Activated CD8-positive, alpha-beta T cell treated with anti-CD3 and anti-CD28 coated beads for 36 hours (primary cell): ENCODE measurements at regions of chr22 and their contacts with region 1.

Region 1: DNA sequence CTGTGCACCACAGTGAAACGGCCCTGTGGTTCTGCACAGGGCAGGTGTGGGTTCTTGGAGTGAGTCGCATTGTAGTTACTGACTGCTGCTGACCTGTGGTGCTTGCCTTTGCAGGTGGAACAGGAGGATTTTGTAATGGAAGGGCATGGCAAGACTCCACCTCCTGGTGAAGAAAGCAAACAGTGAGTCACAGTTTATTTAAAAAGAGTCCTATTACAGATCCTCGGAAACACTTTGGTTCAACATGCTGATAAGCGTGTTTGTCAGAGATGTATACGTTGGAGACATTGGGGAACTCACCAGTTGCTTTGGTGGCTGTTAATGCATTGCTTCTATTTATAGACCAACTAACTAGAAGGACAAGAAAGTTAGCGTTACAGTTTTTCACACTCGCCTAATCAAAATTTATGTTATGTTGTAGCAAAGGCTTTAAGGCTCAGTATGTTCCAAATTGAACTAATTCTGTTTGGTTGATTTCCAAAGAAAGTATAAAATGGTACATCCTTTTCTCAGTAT is 21.7 kb upstream of the TNRC6B start:
- DNase-seq: peak; percentile 32
- ATAC-seq: peak; percentile 78
- H3K4me3 Mint-ChIP-seq: no peak overlapping the region
- H3K27ac Mint-ChIP-seq: peak overlapping the region; percentile 62
- H3K4me1 Mint-ChIP-seq: peaks cover 12% of the 10 kb centered on the region
- H3K27me3 Mint-ChIP-seq: no peaks in the 10 kb centered on the region
- CTCF ChIP-seq: no peak

Region 2: DNA sequence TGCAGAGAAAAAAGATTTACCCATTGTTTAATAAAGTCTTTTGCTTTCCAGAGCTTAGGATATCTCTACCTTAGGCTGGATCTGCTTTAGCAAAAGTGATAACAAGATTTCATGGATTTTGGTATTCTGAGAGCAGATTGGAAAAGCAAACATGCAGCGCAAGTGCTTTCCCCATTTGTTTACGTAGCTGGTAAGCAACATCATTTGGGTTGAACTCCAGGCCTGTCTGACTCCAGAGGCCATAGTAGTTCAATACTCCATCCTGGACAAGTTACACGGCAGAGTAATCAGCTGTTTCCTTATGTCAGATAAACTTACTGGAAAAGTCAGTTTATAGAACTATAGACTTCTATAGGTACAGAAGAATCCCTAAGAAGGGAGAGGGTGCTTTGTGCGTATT is 18.9 kb before region 1 on chr22:
- CTCF ChIA-PET with region 1: no interaction called
- POLR2A ChIA-PET with region 1: interaction called, 10 read pairs
- intact Hi-C with region 1: no loop called
- DNase-seq: no peak
- ATAC-seq: no peak
- H3K4me3 Mint-ChIP-seq: no peak overlapping the region
- H3K27ac Mint-ChIP-seq: no peak overlapping the region
- H3K4me1 Mint-ChIP-seq: peaks cover 7% of the 10 kb centered on the region
- H3K27me3 Mint-ChIP-seq: no peaks in the 10 kb centered on the region
- CTCF ChIP-seq: no peak

Region 3: GRCh38 chr22:40224702-40225101 is 68.6 kb after region 1 on chr22:
- CTCF ChIA-PET with region 1: no interaction called
- POLR2A ChIA-PET with region 1: no interaction called
- intact Hi-C with region 1: no loop called
- DNase-seq: peak; percentile 71
- ATAC-seq: peak; percentile 96
- H3K4me3 Mint-ChIP-seq: peak overlapping the region; percentile 40
- H3K27ac Mint-ChIP-seq: peak overlapping the region; percentile 85
- H3K4me1 Mint-ChIP-seq: peaks cover 55% of the 10 kb centered on the region
- H3K27me3 Mint-ChIP-seq: no peaks in the 10 kb centered on the region
- CTCF ChIP-seq: no peak

Region 4: DNA sequence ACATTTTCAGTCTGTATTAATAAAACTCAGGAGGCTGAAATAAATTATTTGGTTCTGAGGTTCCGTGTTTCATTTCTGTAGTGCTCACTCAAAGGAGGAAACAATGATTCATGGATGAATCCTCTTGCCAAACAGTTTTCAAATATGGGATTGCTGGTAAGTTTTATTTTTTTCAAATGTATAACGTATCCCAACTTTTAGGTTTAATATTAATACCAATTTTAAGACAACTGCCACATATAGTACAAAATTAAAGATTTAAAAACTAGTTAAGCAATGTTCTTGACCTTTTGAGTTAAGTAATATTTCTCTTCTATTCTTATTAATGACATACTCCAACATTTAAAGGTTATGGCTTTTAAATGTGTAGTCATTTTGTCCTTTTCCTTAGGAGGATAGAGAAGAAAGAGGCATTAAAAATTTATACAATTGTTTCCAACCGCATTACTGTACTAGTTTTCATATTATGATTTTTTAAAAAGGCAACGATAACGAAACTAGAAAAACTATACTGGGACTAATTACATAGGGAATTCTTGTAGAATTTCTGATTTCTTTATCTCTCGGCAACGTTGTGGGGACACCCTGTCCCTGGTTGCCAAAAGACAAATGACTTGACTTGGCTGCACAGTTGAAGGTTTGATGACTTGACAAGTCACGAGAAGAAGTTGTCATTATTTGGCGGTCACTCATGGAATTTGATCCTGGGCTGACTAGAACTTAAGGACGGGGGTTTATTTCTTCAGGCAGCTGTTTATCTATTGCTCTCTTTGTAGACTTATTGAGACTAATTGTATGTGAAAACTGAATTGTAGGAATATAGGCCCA is 121.2 kb after region 1 on chr22:
- CTCF ChIA-PET with region 1: no interaction called
- POLR2A ChIA-PET with region 1: no interaction called
- intact Hi-C with region 1: no loop called
- DNase-seq: no peak
- ATAC-seq: peak; percentile 6
- H3K4me3 Mint-ChIP-seq: no peak overlapping the region
- H3K27ac Mint-ChIP-seq: peak overlapping the region; percentile 98
- H3K4me1 Mint-ChIP-seq: peaks cover 49% of the 10 kb centered on the region
- H3K27me3 Mint-ChIP-seq: no peaks in the 10 kb centered on the region
- CTCF ChIP-seq: no peak